Breast epithelium (tissue), 4 donors: ENCODE measurements at regions of chr14 and their contacts with region 1.

Region 1: DNA sequence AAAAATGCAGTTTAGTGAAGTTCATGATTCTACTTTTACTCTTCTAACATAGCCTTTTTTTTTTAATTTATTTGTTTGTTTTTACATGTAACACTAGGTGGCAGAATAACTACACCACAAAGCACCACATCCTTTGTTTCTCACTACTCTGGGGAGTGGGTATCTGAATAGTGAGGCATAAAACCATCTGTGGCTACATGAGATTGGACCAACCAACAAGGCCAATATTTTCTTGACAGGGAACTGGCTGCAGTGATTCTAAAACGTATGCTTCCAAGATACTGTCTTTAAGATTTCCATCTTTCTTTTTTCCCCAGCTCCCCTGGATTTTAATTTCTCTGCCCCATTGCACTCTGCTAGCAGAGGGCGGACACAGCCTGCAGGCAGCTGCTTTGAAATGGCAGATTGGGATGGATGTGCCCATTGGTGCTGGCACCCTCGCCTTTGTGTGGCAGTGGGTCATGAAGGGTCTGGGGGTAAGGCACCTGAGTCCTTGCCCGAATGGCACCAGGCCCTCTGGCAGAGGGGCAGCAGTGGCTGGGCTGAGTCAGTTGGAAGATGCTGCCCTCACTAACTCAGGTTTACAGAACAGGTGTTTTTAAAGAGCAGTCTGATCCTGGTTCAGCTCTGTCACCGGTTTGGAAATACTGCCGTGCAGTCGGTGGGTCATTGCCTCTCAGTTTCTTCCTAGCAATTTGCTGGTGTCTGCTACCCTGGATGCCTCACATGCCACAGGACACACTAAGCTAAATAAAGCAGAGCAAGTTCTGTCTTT is 429.1 kb downstream of the RAD51B start:
- DNase-seq: no peak
- H3K4me3 ChIP-seq: no peak overlapping the region
- H3K27ac ChIP-seq: peak overlapping the region; percentile 90 to 92
- H3K4me1 ChIP-seq: peaks cover 11 to 59% of the 10 kb centered on the region in 2 donors
- H3K27me3 ChIP-seq: no peaks in the 10 kb centered on the region
- CTCF ChIP-seq: peak; percentile 57 to 75 (median 70)
- POLR2A ChIP-seq: no peak

Region 2: DNA sequence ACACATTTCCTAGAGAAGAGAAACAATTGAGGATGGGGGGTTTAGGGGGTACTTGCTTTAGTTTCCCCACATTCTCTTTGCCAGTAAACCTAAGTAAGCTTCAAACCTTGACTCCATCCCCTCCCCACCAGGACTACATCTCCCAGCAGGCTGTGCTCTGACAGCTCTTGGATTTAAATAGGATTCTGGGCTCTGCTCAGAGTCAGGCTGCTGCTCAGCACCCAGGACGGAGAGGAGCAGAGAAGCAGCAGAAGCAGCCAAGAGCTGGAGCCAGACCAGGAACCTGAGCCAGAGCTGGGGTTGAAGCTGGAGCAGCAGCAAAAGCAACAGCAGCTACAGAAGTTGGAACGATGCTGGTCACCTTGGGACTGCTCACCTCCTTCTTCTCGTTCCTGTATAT is 526.4 kb before region 1 on chr14:
- intact Hi-C with region 1: no loop called
- DNase-seq: no peak
- H3K4me3 ChIP-seq: peak overlapping the region in 1 of 3 donors; percentile 36
- H3K27ac ChIP-seq: no peak overlapping the region
- H3K4me1 ChIP-seq: no peaks in the 10 kb centered on the region
- H3K27me3 ChIP-seq: no peaks in the 10 kb centered on the region
- CTCF ChIP-seq: no peak
- POLR2A ChIP-seq: no peak

Region 3: DNA sequence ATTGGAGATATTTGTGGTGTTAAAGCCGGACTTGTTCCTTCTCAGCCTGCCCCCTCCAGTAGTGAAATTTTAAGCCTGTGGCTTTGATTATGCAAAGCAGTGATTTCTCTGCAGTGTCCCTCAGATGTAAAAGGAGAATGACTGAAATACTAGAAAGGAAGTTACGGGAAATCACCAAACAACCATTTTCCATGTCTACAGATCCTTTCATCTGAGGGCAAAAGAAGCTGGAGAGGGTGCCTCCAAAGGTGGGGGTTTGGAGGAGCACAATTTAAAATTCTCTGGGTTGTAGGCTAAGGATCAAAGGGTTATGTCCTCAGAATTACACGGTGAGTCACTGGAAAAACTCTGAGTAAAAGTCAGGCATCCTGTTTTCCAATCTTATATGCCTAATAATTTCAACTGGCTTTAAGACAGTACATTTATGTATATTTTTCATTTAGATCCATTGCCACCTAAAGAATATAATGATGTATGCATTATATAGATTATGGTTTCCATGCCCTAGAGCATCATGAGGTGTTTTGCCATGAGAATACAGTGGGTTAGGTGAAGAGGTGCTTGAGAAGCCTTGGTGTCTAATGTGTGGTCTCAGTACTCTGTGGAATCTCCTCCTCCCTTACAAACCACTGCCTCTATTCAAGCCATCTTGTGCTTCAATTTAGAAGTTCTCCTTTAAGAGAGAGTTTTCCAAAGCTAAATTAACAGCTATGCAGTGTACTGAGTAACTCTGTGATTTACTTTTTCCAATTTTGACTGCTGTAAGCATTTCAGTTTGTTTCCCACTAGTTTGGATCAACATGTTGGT is 66.9 kb before region 1 on chr14:
- intact Hi-C with region 1: no loop called
- DNase-seq: no peak
- H3K4me3 ChIP-seq: no peak overlapping the region
- H3K27ac ChIP-seq: peak overlapping the region; percentile 60 to 62
- H3K4me1 ChIP-seq: peaks cover 0 to 3% of the 10 kb centered on the region in 2 donors
- H3K27me3 ChIP-seq: no peaks in the 10 kb centered on the region
- CTCF ChIP-seq: no peak
- POLR2A ChIP-seq: no peak

Region 4: GRCh38 chr14:68278581-68279436 is 30.1 kb after region 1 on chr14:
- intact Hi-C with region 1: loop called (anchors 2 kb)
- DNase-seq: no peak
- H3K4me3 ChIP-seq: no peak overlapping the region
- H3K27ac ChIP-seq: peak overlapping the region; percentile 16 to 20
- H3K4me1 ChIP-seq: peaks cover 0 to under 1% of the 10 kb centered on the region in 2 donors
- H3K27me3 ChIP-seq: no peaks in the 10 kb centered on the region
- CTCF ChIP-seq: no peak
- POLR2A ChIP-seq: no peak